Posterior cingulate gyrus (tissue), 11 donors: ENCODE measurements at regions of chr7 and their contacts with region 1.

Region 1: DNA sequence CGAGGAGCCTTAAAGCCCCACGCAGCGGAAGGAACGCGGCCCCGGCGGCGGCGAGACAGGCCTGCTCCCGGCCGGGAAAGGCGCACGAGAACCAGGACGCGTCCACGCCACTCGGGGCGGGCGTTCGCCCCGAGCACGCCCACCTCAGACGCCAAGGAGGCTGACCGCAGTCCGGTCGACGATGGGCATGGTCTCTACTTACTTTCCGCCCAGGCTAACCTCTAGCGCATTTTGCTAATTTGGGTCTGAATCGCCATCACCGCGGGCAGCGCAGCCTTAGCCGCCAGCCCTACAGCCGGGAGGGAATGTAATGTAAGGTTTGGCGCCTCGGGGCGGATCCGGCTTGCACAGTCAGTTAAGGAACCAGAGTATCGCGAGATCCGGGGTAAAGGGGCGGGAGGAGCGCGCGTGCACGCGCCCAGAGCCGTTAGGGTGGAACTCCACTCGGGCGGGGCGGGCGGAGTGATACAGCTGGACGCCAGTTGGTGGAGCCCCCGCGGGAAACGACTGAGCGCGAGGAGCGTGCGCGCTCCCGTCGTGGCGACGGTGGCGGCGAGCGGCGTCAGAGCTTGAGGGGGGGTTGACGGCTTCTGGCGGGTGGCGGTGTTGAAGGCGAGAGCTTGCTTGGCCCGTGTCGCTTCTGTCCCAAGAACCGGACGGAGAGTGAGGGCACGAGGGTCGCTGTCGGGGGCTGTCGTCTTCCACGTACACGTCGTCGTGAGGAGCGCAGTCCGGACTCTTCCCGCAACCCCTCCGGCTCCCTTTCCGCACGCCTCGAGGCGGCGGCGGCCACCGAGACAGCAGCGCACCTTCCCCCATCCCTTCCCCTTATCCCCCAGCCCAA is at the start of gene LUC7L2:
- DNase-seq: peak; percentile 99 to 100 (median 100)

Region 2: DNA sequence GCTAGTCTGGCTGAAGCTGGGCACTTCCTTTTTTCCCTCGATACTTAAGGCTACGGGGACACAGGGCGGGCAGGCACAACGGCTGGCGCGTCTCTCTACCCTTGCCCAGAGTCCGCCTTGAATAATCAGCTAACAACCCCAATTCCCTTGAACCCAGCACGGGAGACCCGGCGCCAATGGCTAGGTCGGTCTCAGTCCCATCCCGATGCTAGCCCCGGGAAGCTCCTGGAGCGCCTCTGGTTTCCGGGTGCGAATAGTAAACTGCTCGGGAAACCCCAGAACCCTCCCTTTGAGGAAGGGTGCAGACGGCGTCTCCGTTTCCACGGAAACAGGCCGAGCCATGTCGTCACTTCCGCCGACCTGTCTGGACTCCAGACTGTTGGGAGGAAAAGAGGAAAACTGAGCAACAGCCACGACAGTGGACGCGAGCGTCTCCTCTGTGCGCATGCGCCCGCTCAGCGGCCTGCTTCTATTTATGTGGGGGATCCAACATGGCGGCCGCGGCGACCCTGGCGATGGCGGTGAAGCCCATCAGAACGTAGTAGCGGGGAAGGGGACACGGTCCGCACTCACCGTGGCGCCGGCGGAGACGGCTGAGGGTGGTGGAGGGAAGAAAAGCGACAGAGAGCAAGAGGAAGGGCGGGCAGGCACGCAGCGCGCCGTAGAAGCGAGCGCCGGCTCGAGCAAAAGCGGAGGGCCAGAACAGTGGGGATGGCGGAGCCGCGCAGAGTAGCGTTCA is 128.6 kb before region 1 on chr7 and contains the start of gene UBN2:
- intact Hi-C with region 1: loop called (anchors 5 kb)
- DNase-seq: peak; percentile 97 to 100 (median 98)

Region 3: GRCh38 chr7:139341058-139341775 is 18.4 kb before region 1 on chr7 and contains the start of gene FMC1:
- intact Hi-C with region 1: loop called (anchors 1 kb)
- DNase-seq: peak; percentile 93 to 99 (median 96)

Region 4: DNA sequence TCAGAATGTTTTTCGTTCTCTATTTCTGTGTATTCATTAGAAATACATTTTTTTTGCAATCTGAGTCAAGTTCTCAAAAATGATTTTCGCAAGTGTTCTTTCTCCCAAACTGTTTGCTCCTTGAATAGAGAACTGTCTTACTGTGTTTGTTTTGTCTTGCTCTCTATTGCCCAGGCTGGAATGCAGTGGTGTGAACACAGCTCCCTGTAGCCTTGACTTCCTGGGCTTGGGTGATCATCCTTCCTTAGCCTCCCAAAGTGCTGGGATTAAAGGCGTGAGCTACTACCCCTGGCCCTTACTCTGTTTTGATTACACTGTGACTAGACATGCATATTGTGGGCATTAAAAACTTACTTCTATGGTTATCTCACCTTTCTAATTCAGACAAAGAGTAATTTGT is 56.8 kb after region 1 on chr7:
- intact Hi-C with region 1: loop called (anchors 5 kb)
- DNase-seq: no peak

Region 5: DNA sequence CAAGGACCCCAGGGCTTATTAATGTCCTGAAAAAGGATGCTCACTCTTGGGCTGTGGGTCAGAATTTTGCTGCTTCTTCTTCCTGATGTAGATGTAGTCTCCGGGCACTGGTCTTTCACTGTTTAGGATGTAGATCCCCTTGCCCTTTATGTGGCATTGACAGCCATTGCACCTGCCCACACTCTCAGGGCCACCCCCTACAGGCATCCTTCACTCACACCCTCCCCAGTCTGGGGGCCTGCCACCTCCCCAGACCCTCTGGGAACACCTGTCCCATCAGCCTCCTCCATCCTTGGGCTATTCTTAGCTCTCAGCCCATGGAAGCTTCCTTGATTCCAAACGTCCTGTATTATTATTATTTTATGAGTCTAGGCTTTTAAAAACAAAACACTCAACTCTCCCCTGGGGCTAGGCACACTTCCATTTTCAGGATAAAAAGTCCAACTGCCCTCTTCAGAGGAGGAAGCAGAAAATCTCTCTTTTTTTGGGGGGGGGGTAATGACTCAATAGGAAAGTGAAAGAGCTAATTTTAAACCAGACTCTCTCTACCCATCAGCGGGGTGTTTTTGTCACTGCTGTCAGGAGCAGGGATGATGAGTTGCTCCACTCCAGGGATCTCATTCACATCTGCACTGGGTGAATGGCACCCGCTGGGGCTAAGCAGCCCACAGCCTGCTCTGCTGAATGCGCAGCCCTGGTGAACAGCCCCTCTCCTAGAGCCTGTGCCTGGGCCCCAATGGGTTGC is 135.4 kb after region 1 on chr7:
- intact Hi-C with region 1: loop called (anchors 10 kb)
- DNase-seq: peak in 1 of 10 donors; percentile 51